HepG2 (cell line): ENCODE measurements at regions of chr17 and their contacts with region 1.

Region 1: GRCh38 chr17:7478276-7479153 is 916 bp downstream of the ZBTB4 start:
- DNase-seq: no peak
- ATAC-seq: peak; percentile 17
- H3K4me3 ChIP-seq: peak overlapping the region; percentile 72 to 86 (median 79)
- H3K27ac ChIP-seq: peak overlapping the region; percentile 75
- H3K4me1 ChIP-seq: peaks cover 83% of the 10 kb centered on the region
- H3K27me3 ChIP-seq: no peaks in the 10 kb centered on the region; a peak in 1 of 5 replicates
- CTCF ChIP-seq: no peak; the same call in 1 of the 2 replicates
- EP300 ChIP-seq: no peak
- POLR2A ChIP-seq: no peak
- RAD21 ChIP-seq: no peak

Region 2: GRCh38 chr17:7419819-7420610 is 58.5 kb before region 1 on chr17 and contains the start of gene SPEM1:
- CTCF ChIA-PET with region 1: no interaction called
- POLR2A ChIA-PET with region 1: no interaction called
- in situ Hi-C with region 1: no loop called
- intact Hi-C with region 1: no loop called
- DNase-seq: no peak
- ATAC-seq: peak; percentile 13; the same call in 1 of the 3 replicates
- H3K4me3 ChIP-seq: no peak within 1 kb of the TSS
- H3K27ac ChIP-seq: no peak within 1 kb of the TSS
- H3K4me1 ChIP-seq: peaks cover 13% of the 10 kb centered on the region; the same call in 1 of the 2 replicates
- H3K27me3 ChIP-seq: peaks cover 2 to 5% of the 10 kb centered on the region in 2 experiments; a peak in 1 of 5 replicates
- CTCF ChIP-seq: no peak
- EP300 ChIP-seq: no peak
- POLR2A ChIP-seq: no peak
- RAD21 ChIP-seq: no peak
- total RNA-seq, gene SPEM1: not detected in 2 replicates

Region 3: GRCh38 chr17:7444682-7445618 is 33.6 kb before region 1 on chr17 and contains the start of gene CHRNB1:
- CTCF ChIA-PET with region 1: no interaction called
- POLR2A ChIA-PET with region 1: interaction called, 21 read pairs
- in situ Hi-C with region 1: no loop called
- intact Hi-C with region 1: loop called (anchors 5 kb)
- DNase-seq: peak; percentile 85
- ATAC-seq: peak; percentile 87
- H3K4me3 ChIP-seq: peak within 1 kb of the TSS; percentile 62 to 85 (median 63)
- H3K27ac ChIP-seq: peak within 1 kb of the TSS; percentile 73
- H3K4me1 ChIP-seq: peaks cover 50% of the 10 kb centered on the region
- H3K27me3 ChIP-seq: peaks cover 6 to 27% of the 10 kb centered on the region in 2 experiments; a peak in 4 of 5 replicates
- CTCF ChIP-seq: peak; percentile 69
- EP300 ChIP-seq: 0 out of 4 replicates have a peak, but pooled peaks of 1 of the 2 experiments have one; percentile 3
- POLR2A ChIP-seq: peak in 1 of 2 experiments; percentile 76; a peak in 2 of 4 replicates
- RAD21 ChIP-seq: peak; percentile 43; the same call in 1 of the 2 replicates
- total RNA-seq, gene CHRNB1: 3.6 and 5.4 TPM in 2 replicates

Region 4: GRCh38 chr17:7589891-7590691 is 111.6 kb after region 1 on chr17 and contains the start of gene SOX15:
- CTCF ChIA-PET with region 1: no interaction called
- POLR2A ChIA-PET with region 1: no interaction called
- in situ Hi-C with region 1: no loop called
- intact Hi-C with region 1: no loop called
- DNase-seq: no peak
- ATAC-seq: no peak
- H3K4me3 ChIP-seq: no peak within 1 kb of the TSS
- H3K27ac ChIP-seq: peak within 1 kb of the TSS; percentile 13
- H3K4me1 ChIP-seq: peaks cover 6% of the 10 kb centered on the region
- H3K27me3 ChIP-seq: no peaks in the 10 kb centered on the region
- CTCF ChIP-seq: no peak
- EP300 ChIP-seq: no peak
- POLR2A ChIP-seq: no peak
- RAD21 ChIP-seq: no peak
- total RNA-seq, gene SOX15: 0.18 TPM in 1 of 2 replicates, not detected in the other